Breast epithelium (tissue), 4 donors: ENCODE measurements at regions of chr12 and their contacts with region 1.

Region 1: DNA sequence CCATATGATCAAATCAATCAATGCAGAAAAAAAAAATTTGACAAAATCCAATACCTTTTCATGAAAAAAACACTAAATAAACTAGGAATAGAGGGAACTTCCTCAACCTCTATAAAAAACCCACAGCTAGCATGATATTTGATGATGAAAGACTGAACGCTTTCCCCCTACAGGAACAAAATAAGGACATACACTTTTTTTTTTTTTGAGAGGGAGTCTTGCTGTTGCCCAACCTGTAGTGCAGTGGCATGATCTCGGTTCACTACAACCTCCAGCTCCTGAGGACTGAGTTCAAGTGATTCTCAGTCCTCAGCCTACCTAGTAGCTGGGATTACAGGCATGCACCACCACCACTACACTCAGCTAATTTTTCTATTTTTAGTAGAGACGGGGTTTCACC is 17.9 kb upstream of the CAMKK2 start:
- DNase-seq: no peak
- H3K4me3 ChIP-seq: no peak overlapping the region
- H3K27ac ChIP-seq: no peak overlapping the region
- H3K4me1 ChIP-seq: no peaks in the 10 kb centered on the region
- H3K27me3 ChIP-seq: no peaks in the 10 kb centered on the region
- CTCF ChIP-seq: no peak
- POLR2A ChIP-seq: no peak

Region 2: GRCh38 chr12:121626087-121626852 is 311.8 kb after region 1 on chr12 and contains the start of gene ORAI1:
- intact Hi-C with region 1: no loop called
- DNase-seq: peak; percentile 90 to 94
- H3K4me3 ChIP-seq: peak within 1 kb of the TSS; percentile 62 to 73 (median 67)
- H3K27ac ChIP-seq: peak within 1 kb of the TSS; percentile 79 to 96
- H3K4me1 ChIP-seq: peaks cover 3% of the 10 kb centered on the region in 2 donors
- H3K27me3 ChIP-seq: no peaks in the 10 kb centered on the region
- CTCF ChIP-seq: peak in 1 of 3 donors; percentile 33
- POLR2A ChIP-seq: no peak
- total RNA-seq, gene ORAI1: 6.0 to 12.5 (median 6.7) TPM

Region 3: DNA sequence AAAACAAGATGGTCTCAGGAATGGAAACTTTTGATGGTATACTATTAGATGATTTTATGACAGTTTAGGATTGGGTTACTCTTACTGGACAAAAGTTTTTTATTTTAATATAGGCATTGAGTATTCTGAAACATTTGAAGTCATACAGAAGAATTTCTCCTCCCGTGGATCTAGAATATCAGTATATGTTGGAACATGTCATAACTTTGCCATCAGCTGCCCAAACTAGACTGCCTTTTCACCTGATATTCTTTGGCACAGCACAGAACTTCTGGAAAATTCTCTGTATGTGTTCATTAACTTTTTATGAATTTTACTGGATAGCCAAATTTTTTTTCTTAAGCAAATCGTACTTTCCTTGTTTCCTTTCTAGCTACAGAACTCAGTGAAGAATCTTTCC is 1288.0 kb after region 1 on chr12:
- intact Hi-C with region 1: loop called (anchors 10 kb)
- DNase-seq: no peak
- H3K4me3 ChIP-seq: no peak overlapping the region
- H3K27ac ChIP-seq: no peak overlapping the region
- H3K4me1 ChIP-seq: no peaks in the 10 kb centered on the region
- H3K27me3 ChIP-seq: no peaks in the 10 kb centered on the region
- CTCF ChIP-seq: no peak
- POLR2A ChIP-seq: no peak